ENCODE measurements at regions of chr20 and their contacts with region 1.

Region 1: DNA sequence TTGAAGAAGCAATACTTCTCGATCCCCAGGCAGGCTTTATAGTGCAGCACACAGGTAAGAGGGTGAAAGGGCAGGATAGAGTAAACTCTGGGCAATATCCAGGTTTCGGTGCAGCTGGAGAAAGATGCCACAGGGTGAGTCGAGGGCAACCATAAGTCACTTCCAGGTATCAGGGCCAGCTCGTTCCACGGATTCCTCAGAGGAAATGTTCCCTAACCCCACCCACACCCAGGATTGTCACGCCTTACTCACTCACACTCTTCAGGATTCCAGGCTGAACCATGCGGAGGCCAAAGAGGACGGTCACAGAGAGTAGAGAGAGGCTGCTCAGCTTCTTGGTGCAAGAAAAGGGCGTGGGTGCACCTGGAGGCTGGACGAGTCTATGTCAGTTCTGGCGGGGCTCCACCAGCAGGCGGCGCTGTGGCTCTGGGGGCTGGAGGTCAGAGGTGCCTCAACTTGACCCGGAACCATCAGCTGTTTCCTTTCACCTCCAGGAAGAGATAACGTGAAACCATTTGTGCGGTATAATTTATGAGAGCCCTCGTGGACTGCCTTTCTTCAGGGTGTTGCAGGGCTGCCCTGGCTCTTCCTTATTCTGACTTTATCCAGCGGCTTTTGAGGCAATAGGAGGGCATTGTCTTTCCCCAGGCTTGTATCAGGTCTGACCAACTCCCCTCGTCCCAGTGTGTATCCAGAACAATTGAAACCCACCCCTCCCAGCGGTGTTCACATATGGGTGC is 14.5 kb upstream of the WFDC12 start:
- DNase-seq: peak; percentile 95
- ATAC-seq: peak; percentile 96
- H3K4me3 Mint-ChIP-seq: no peak overlapping the region
- H3K27ac Mint-ChIP-seq: no peak overlapping the region
- H3K4me1 Mint-ChIP-seq: no peaks in the 10 kb centered on the region
- H3K27me3 Mint-ChIP-seq: peaks cover 30% of the 10 kb centered on the region
- CTCF ChIP-seq: peak; percentile 98

Region 2: DNA sequence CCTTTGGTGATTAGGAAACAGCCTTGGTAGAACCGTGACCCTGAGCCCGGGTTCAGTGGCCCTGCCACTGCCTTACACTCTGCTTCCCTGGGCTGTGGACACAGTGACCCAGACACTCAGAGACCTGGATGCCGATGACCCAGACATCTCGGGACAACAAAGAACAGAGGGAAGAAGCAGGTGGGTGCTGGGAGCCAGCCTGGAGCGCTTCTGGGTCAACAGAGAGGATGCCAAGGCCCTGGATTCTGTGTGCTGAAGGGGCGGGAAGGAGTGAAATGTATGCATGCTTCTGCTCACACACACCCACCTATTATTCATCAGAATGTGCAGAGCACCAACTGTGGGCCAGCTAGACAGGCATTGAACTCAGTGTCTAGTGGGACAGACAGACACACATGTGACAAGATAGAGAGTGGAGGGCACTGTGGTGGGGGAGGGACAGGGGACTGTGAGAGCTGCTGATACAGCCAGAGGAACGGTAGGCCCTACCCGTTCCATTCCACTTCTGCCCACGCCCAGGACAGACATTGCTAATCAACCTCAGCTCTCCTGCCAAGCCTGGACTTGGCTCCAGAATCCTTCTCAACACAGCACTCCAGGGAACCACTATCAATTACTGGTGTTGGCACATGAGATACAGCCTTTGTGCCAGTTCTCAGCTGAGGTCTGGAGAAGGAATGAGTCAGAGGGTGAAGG is 372.9 kb before region 1 on chr20:
- CTCF ChIA-PET with region 1: no interaction called
- POLR2A ChIA-PET with region 1: no interaction called
- DNase-seq: no peak
- ATAC-seq: no peak
- H3K4me3 Mint-ChIP-seq: no peak overlapping the region
- H3K27ac Mint-ChIP-seq: no peak overlapping the region
- H3K4me1 Mint-ChIP-seq: peaks cover 7% of the 10 kb centered on the region; the same call in 1 of the 2 replicates
- H3K27me3 Mint-ChIP-seq: no peaks in the 10 kb centered on the region
- CTCF ChIP-seq: no peak

Region 3: DNA sequence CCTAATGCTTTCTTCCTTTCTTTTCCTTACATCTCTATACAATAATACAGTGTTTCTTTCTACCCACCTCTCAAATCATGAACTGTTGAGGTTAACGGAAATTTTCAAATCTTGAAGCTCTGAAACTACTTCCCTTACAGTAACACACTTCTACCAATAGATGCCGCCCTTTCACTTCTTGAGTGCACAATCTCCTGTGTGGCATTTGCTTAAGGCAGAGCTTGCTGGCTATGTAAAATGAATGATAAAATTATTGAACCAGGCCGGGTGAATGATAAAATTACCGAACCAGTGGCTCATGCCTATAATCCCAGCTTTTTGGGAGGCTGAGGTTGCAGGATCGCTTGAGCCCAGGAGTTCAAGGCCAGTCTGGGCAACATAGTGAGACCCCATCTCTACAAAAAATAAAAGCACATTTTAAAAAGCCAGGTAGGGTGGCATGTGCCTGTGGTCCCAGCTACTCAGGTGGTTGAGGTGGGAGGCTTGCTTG is 94.6 kb before region 1 on chr20:
- CTCF ChIA-PET with region 1: interaction called, 18 read pairs
- POLR2A ChIA-PET with region 1: no interaction called
- DNase-seq: no peak
- ATAC-seq: peak; percentile 81
- H3K4me3 Mint-ChIP-seq: no peak overlapping the region
- H3K27ac Mint-ChIP-seq: peak overlapping the region; percentile 37
- H3K4me1 Mint-ChIP-seq: peaks cover 47% of the 10 kb centered on the region
- H3K27me3 Mint-ChIP-seq: no peaks in the 10 kb centered on the region
- CTCF ChIP-seq: peak; percentile 38

Region 4: DNA sequence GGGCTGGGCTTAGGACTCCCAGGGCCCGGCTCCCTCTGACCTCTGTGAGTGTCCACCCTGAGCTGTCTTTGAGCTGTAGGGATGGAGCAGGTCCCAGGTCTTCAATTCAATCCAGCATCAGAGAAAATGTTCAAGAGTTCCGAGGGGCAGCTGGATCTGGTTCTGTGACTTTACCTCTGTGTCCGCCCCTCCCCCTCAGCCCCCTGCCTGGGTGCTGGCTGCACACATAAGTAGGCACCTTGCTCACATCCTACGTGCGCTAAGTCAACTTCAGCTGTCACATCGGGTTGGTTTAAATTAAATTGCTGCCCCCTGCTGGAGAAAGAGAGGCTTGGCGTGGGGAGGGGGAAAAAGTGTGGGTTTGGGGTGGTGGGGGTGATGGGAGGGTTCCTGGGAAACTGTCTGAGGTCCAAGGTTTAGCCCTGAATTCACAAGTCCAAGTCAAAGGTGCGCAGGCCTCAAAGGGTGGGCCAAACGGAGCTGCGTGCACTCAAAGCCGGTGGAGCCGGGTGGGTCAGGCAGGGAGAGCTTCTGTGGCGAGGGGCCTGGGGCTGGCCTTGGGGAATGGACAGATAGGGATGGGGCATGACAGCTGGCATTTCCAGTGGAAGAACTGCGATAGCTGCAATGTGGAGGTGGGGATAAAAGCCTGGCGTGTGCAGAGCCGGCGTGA is 26.8 kb before region 1 on chr20:
- CTCF ChIA-PET with region 1: interaction called, 29 read pairs
- POLR2A ChIA-PET with region 1: no interaction called
- DNase-seq: peak; percentile 52
- ATAC-seq: peak; percentile 54
- H3K4me3 Mint-ChIP-seq: no peak overlapping the region
- H3K27ac Mint-ChIP-seq: no peak overlapping the region
- H3K4me1 Mint-ChIP-seq: peaks cover 8% of the 10 kb centered on the region; the same call in 1 of the 2 replicates
- H3K27me3 Mint-ChIP-seq: peaks cover 4% of the 10 kb centered on the region; the same call in 1 of the 2 replicates
- CTCF ChIP-seq: peak; percentile 71

Region 5: DNA sequence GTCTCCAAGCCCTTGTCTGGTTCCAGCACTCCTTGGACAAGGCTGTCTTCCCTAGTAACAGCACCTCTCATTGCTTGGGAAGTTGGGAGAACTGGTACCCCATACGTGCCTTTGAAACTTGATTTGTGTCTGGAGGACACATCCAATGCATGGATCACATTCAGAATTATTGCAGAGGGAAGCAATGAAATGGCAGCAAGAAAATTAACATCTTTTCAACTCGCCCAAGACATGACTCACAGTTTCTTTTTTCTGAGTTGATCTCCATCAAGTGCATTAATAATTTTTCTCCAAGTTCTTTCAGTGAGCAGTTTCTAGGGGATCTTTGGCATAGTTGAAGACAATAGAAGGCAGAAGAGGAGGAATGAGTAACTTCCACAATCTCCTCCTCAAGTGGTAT is 13.7 kb after region 1 on chr20:
- CTCF ChIA-PET with region 1: interaction called, 13 read pairs
- POLR2A ChIA-PET with region 1: no interaction called
- DNase-seq: no peak
- ATAC-seq: no peak
- H3K4me3 Mint-ChIP-seq: no peak overlapping the region
- H3K27ac Mint-ChIP-seq: no peak overlapping the region
- H3K4me1 Mint-ChIP-seq: no peaks in the 10 kb centered on the region
- H3K27me3 Mint-ChIP-seq: peaks cover 32% of the 10 kb centered on the region
- CTCF ChIP-seq: no peak

Region 6: DNA sequence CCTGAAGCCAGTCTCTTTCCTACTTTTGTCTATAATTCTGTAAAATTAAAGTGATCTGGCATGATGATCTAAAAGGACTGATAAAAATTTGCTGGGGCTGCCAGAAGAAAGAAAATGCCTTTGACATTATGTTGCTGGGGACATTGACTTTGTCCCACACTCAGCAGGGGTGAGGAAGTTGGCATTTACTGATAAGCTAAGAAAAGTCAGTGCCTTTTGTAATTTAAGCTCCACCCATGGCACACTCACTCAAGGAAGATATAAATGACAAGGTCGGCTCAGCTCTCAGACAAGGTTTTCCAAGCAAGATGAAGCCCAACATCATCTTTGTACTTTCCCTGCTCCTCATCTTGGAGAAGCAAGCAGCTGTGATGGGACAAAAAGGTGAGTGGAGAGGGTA is 68.0 kb after region 1 on chr20 and contains the start of gene SEMG1:
- CTCF ChIA-PET with region 1: interaction called, 12 read pairs
- POLR2A ChIA-PET with region 1: no interaction called
- DNase-seq: no peak
- ATAC-seq: no peak
- H3K4me3 Mint-ChIP-seq: no peak within 1 kb of the TSS
- H3K27ac Mint-ChIP-seq: no peak within 1 kb of the TSS
- H3K4me1 Mint-ChIP-seq: peaks cover 48% of the 10 kb centered on the region
- H3K27me3 Mint-ChIP-seq: peaks cover 14% of the 10 kb centered on the region
- CTCF ChIP-seq: no peak
- total RNA-seq, gene SEMG1: 2.0 to 2.9 TPM (median 2.1 TPM) in 3 replicates

Region 7: DNA sequence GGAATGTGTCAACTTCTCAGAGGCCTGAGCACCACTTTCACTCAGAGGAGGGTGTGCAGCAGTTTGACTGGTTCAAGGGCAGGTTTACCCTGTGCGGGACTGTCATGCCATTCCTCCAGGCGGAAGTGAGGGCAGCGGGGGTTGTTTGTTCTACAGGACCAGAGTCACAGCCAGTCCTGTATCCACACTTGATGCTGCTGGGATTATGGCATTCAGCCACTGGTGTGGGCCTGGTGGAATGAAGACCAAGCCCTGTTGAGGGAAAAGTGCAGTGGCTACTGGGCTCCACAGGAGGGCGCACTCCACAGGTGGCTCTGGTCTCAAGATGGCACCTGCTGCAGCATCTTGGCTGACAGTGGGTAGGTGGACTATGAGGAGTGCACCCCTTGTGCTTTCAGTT is 97.3 kb after region 1 on chr20:
- CTCF ChIA-PET with region 1: interaction called, 91 read pairs
- POLR2A ChIA-PET with region 1: no interaction called
- DNase-seq: peak; percentile 75
- ATAC-seq: peak; percentile 97
- H3K4me3 Mint-ChIP-seq: no peak overlapping the region
- H3K27ac Mint-ChIP-seq: no peak overlapping the region
- H3K4me1 Mint-ChIP-seq: no peaks in the 10 kb centered on the region
- H3K27me3 Mint-ChIP-seq: peaks cover 14% of the 10 kb centered on the region
- CTCF ChIP-seq: peak; percentile 90

Region 8: GRCh38 chr20:45311589-45312211 is 173.0 kb after region 1 on chr20:
- CTCF ChIA-PET with region 1: interaction called, 15 read pairs
- POLR2A ChIA-PET with region 1: no interaction called
- DNase-seq: peak; percentile 92
- ATAC-seq: peak; percentile 68
- H3K4me3 Mint-ChIP-seq: peak overlapping the region; percentile 63
- H3K27ac Mint-ChIP-seq: no peak overlapping the region
- H3K4me1 Mint-ChIP-seq: peaks cover 15% of the 10 kb centered on the region
- H3K27me3 Mint-ChIP-seq: peaks cover 33% of the 10 kb centered on the region
- CTCF ChIP-seq: peak; percentile 71